AG04450 (cell line): ENCODE measurements at regions of chr3 and their contacts with region 1.

Region 1: DNA sequence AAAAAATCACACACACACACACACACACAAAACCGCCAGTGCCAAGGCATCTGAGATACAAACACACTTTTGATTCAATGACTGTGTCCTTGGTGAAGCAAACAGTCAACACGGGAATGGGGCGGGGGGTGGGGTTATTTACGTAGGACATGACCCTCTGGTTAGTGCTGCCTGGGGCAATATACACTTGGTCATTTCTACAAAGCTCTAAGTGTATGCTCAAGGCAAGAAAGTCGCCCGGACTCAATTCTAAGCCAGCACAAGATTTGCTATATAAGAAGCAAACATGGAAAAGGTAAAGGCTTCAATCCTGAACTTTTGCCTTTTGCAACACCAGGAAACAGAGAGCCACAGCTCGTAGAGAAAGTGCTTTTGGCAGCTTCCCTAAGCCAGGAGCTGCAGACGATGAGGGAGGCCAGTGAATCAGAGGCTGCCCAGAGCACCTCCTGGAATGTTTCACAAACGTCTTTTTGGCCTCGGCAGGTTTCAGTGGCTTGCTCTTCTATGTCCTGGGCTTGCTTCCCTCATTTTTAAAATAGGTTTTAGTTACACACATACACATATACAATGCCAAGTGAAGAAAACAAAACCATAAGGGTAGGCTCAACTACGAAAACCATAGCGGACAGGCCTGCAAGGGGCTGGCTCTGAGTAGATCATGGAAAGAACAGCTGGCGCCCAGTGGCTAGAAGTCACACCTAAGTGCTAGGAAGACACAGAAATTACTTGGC is 73.6 kb downstream of the TM4SF4 start:
- DNase-seq: peak; percentile 77
- H3K4me3 ChIP-seq: peak overlapping the region; percentile 23
- H3K27ac ChIP-seq: peak overlapping the region; percentile 89
- H3K27me3 ChIP-seq: no peaks in the 10 kb centered on the region
- CTCF ChIP-seq: no peak

Region 2: GRCh38 chr3:149567381-149567780 is 19.3 kb after region 1 on chr3:
- CTCF ChIA-PET with region 1: interaction called, 16 read pairs
- POLR2A ChIA-PET with region 1: no interaction called
- DNase-seq: no peak
- H3K4me3 ChIP-seq: no peak overlapping the region
- H3K27ac ChIP-seq: no peak overlapping the region
- H3K27me3 ChIP-seq: no peaks in the 10 kb centered on the region
- CTCF ChIP-seq: no peak